ENCODE measurements at regions of chr3 and their contacts with region 1.

Region 1: DNA sequence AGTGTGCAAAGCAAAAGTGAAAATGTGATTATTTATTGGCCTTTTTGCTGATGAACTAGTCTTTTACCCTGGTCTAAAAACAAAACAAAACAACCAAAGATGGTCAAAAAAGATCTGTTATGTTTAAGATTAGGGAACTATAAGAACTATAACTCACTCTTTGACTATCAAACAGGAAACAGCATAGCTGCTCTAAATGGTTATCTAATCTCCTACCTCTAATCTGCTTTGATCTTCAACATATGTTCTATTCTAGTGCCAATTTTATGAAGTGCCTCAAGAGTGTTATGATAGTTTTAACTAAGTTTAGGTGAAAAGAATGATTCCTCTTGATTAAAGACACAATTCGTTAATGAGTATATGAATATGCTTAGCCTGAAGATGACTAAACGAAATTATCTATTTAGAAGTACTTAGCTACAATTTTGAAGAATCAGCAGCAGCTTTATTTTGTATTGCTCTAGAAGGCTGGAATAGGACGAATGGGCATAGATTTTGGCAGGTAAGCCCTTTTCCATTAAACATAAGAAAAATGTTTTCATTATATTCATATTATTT is 46.0 kb downstream of the SETD2 start:
- DNase-seq: no peak
- ATAC-seq: no peak
- H3K4me3 ChIP-seq: no peak overlapping the region
- H3K4me3 Mint-ChIP-seq: no peak overlapping the region
- H3K27ac ChIP-seq: no peak overlapping the region
- H3K27ac Mint-ChIP-seq: peak overlapping the region; percentile 13
- H3K4me1 ChIP-seq: peaks cover 13% of the 10 kb centered on the region
- H3K4me1 Mint-ChIP-seq: peaks cover 37% of the 10 kb centered on the region
- H3K27me3 ChIP-seq: no peaks in the 10 kb centered on the region
- H3K27me3 Mint-ChIP-seq: no peaks in the 10 kb centered on the region
- CTCF ChIP-seq: no peak

Region 2: GRCh38 chr3:47145272-47145671 is 27.4 kb after region 1 on chr3:
- CTCF ChIA-PET with region 1: no interaction called
- POLR2A ChIA-PET with region 1: no interaction called
- intact Hi-C with region 1: loop called in 1 of 2 experiments (anchors 1 kb)
- DNase-seq: no peak
- ATAC-seq: no peak
- H3K4me3 ChIP-seq: no peak overlapping the region
- H3K4me3 Mint-ChIP-seq: no peak overlapping the region
- H3K27ac ChIP-seq: no peak overlapping the region
- H3K27ac Mint-ChIP-seq: no peak overlapping the region
- H3K4me1 ChIP-seq: peaks cover 32% of the 10 kb centered on the region
- H3K4me1 Mint-ChIP-seq: peaks cover 68% of the 10 kb centered on the region
- H3K27me3 ChIP-seq: no peaks in the 10 kb centered on the region
- H3K27me3 Mint-ChIP-seq: no peaks in the 10 kb centered on the region
- CTCF ChIP-seq: no peak